PC-3 (cell line): ENCODE measurements at regions of chr11 and their contacts with region 1.

Region 1: DNA sequence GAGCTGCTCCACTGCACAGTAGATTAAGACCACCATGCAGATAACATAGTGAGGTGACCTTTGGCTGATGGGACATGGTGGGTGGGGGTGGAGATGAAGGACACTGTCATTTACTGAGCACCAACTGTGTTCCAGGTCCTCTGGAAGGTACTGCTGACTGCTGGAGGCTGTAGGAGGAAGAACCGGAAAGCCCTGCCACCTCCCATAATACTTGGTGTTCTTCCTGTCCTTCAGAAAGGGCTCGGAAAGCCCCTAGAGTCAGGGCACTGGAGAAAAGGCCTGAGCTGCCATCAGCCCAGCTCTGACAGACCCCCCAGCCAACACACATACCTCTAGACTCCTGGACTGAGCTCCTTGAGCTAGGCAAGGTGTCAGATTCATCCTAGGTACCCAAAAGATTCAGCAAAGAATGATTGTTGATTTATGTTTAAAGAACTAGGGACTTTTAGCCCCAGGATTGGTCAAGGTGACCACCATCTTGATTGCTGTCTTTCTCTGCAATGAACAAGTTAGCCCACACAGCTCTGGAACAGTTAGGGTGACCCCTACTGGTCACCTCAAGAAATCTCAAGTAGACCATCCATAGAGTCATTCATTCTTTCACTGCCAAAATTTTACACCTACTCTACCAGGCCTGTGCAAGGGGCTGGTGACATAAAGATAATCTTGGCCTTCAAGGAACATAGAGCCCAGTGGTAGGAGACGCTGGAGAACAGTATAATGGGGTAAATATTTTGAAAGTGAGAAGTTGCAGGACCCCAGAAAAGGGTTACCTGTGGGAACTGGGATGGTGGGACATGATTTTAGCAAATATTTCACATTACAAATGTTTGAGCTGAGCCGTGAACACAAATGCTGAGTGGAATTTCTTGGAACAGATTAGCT is 39.4 kb downstream of the IRAG1 start:
- DNase-seq: peak; percentile 62
- ATAC-seq: peak; percentile 80
- H3K4me3 ChIP-seq: no peak overlapping the region
- H3K27ac ChIP-seq: no peak overlapping the region
- H3K4me1 ChIP-seq: peaks cover 31% of the 10 kb centered on the region
- H3K27me3 ChIP-seq: no peaks in the 10 kb centered on the region
- CTCF ChIP-seq: peak; percentile 86

Region 2: GRCh38 chr11:10044618-10045017 is 609.5 kb before region 1 on chr11:
- CTCF ChIA-PET with region 1: no interaction called
- POLR2A ChIA-PET with region 1: no interaction called
- intact Hi-C with region 1: no loop called
- DNase-seq: no peak
- ATAC-seq: no peak
- H3K4me3 ChIP-seq: no peak overlapping the region
- H3K27ac ChIP-seq: no peak overlapping the region
- H3K4me1 ChIP-seq: no peaks in the 10 kb centered on the region
- H3K27me3 ChIP-seq: no peaks in the 10 kb centered on the region
- CTCF ChIP-seq: no peak

Region 3: GRCh38 chr11:10413268-10413667 is 240.9 kb before region 1 on chr11:
- CTCF ChIA-PET with region 1: no interaction called
- POLR2A ChIA-PET with region 1: no interaction called
- intact Hi-C with region 1: loop called (anchors 1 kb)
- DNase-seq: peak; percentile 62
- ATAC-seq: peak; percentile 96
- H3K4me3 ChIP-seq: no peak overlapping the region
- H3K27ac ChIP-seq: no peak overlapping the region
- H3K4me1 ChIP-seq: 0 out of 2 replicates have a peak, but pooled peaks cover 4% of the 10 kb centered on the region
- H3K27me3 ChIP-seq: no peaks in the 10 kb centered on the region
- CTCF ChIP-seq: peak; percentile 57

Region 4: DNA sequence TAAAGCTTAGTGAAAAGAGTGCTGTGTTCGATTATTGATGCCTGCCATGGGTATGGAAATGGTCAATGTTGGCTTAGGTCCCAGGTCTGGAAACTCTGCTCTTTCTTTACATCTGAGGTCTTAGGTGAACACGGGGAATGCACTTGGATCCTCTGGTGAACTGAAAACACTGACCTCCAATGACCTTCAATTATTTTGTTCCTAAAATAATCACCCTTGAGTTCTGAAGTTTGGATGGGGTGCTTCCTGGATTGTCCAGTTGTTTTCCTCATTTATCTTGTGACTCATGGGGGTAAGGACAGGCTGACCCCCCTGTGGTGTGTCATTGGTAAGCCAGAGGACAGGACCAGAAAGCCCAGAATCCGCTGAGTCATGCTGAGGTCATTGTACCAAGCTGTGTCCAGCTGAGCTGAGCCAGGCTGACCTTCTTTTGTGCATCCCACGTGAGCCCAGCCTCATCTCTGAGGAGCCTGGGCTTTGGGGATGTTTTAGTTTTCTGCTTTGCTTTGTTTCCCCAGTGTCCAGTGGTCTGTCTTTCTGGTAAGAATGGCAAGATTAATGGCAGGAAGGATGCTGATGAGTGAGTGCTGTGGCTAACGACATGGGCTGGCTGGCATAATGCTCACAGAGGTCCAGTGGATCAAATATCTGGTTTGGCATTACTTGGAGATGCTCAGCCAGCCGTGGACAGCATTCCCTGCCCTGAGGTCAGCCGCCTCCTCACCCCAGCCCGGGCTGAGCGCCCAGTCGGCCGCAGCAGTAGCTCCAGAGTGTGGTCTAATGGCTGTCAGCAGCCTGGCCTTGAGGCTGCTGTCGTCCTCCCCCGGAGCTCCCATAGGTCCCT is 163.5 kb before region 1 on chr11:
- CTCF ChIA-PET with region 1: no interaction called
- POLR2A ChIA-PET with region 1: no interaction called
- intact Hi-C with region 1: no loop called
- DNase-seq: peak; percentile 97
- ATAC-seq: peak; percentile 82
- H3K4me3 ChIP-seq: no peak overlapping the region
- H3K27ac ChIP-seq: peak overlapping the region; percentile 79
- H3K4me1 ChIP-seq: peaks cover 43% of the 10 kb centered on the region
- H3K27me3 ChIP-seq: no peaks in the 10 kb centered on the region
- CTCF ChIP-seq: no peak

Region 5: GRCh38 chr11:10526974-10527918 is 126.9 kb before region 1 on chr11:
- CTCF ChIA-PET with region 1: no interaction called
- POLR2A ChIA-PET with region 1: no interaction called
- intact Hi-C with region 1: no loop called
- DNase-seq: peak; percentile 81
- ATAC-seq: peak; percentile 96
- H3K4me3 ChIP-seq: no peak overlapping the region
- H3K27ac ChIP-seq: peak overlapping the region; percentile 51
- H3K4me1 ChIP-seq: peaks cover 24% of the 10 kb centered on the region
- H3K27me3 ChIP-seq: no peaks in the 10 kb centered on the region
- CTCF ChIP-seq: no peak

Region 6: GRCh38 chr11:10564696-10565318 is 89.4 kb before region 1 on chr11:
- CTCF ChIA-PET with region 1: no interaction called
- POLR2A ChIA-PET with region 1: no interaction called
- intact Hi-C with region 1: loop called (anchors 5 kb)
- DNase-seq: peak; percentile 33
- ATAC-seq: peak; percentile 23; the same call in 1 of the 2 replicates
- H3K4me3 ChIP-seq: no peak overlapping the region
- H3K27ac ChIP-seq: no peak overlapping the region
- H3K4me1 ChIP-seq: peaks cover 18% of the 10 kb centered on the region
- H3K27me3 ChIP-seq: no peaks in the 10 kb centered on the region
- CTCF ChIP-seq: peak; percentile 51; the same call in 1 of the 2 replicates

Region 7: GRCh38 chr11:10612216-10612862 is 41.8 kb before region 1 on chr11:
- CTCF ChIA-PET with region 1: no interaction called
- POLR2A ChIA-PET with region 1: no interaction called
- intact Hi-C with region 1: no loop called
- DNase-seq: no peak
- ATAC-seq: no peak
- H3K4me3 ChIP-seq: no peak overlapping the region
- H3K27ac ChIP-seq: no peak overlapping the region
- H3K4me1 ChIP-seq: no peaks in the 10 kb centered on the region
- H3K27me3 ChIP-seq: 0 out of 2 replicates have a peak, but pooled peaks cover 8% of the 10 kb centered on the region
- CTCF ChIP-seq: no peak